ENCODE measurements at regions of chr12 and their contacts with region 1.

Region 1: GRCh38 chr12:25677232-25677937 is 124.3 kb upstream of the LMNTD1 start:
- DNase-seq: no peak
- ATAC-seq: peak in 1 of 2 donors; percentile 38

Region 2: DNA sequence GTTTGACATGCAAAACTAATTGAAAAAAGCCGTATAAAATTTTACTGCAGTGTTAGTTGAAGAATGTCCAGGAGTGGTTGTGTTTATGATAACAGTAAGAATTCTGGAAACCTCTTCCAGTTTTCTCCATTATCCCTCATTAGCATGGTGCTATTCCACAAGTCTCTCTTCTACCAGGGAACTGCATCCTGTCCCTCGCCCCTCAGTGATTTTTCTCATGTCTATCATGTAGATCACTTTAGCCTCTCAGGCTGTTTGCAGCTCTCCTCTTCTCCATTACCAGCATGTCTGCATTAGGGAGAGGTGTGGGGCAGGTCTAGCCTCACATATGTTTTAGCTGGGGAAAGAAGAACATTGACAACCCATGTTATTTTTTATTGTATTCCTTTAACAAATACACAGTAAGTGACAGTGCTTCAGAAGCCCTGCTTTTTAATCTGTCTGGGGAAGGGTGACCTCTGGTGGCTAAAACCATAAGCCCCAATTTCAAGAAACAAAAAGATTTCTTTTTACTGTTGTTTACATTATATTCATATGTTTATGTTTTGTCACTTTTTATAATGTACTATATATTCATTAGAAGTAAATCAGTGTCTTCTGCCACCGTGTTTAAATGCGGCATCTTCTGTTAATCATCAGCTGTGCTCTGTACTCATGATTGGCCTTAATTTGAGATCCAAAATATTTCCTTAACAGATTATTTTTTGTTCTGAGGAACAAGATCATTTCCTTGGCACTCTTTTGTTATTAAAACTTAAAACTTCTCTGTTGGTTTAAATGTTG is 351.8 kb after region 1 on chr12:
- intact Hi-C with region 1: loop called in 1 of 2 experiments (anchors 5 kb)
- DNase-seq: no peak
- ATAC-seq: peak; percentile 64 to 74

Region 3: GRCh38 chr12:26091822-26092221 is 414.4 kb after region 1 on chr12:
- intact Hi-C with region 1: loop called in 1 of 2 experiments (anchors 5 kb)
- DNase-seq: no peak
- ATAC-seq: peak; percentile 83 to 85

Measured in left cardiac atrium (tissue), 4 donors.